CD4-positive, alpha-beta T cell (primary cell): ENCODE measurements at regions of chr7 and their contacts with region 1.

Region 1: DNA sequence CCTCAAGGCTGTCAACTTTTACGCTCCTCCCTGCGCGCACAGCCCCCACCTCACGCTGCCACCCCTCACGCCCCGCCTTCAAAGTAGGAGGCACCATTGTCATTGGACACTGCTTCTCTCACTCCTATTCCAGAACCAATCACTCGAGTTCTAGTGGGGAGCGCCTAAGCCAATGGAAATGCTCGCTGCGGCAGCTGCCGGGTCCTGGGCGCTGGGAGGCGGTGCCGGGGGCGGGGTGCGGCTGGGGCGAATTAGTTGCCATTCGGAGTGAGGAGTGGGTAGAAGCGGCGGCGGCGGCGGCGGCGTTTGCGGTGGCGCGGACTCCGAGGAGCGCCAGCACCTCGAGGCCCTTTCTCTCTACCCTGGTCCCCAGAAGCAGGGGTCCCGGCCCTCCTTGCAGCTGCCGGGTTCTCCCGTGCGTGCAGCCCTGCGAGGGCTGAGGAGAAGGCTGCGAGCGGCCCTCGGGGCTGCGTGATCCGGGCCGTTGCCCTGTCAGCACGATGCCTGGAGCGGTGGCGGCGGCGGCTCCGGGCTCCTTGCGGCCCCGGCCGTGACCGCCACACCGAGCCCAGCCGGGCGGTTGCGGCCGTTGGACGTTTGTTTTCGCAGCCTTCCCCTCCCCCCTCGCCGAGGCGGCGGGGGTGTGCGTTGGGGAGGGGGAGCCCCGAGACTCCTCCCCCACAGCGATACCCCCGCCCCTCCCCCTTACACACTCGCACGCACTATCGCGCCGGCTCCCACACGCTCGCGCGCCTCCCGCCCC is at the start of gene GLCCI1:
- DNase-seq: peak; percentile 91 to 99 (median 96)
- ATAC-seq: peak; percentile 90
- H3K4me3 ChIP-seq: peak within 1 kb of the TSS; percentile 86
- H3K4me3 Mint-ChIP-seq: peak within 1 kb of the TSS; percentile 94
- H3K27ac ChIP-seq: peak within 1 kb of the TSS; percentile 69 to 92
- H3K27ac Mint-ChIP-seq: peak within 1 kb of the TSS; percentile 78
- H3K4me1 ChIP-seq: peaks cover 14% of the 10 kb centered on the region
- H3K4me1 Mint-ChIP-seq: peaks cover 36% of the 10 kb centered on the region
- H3K27me3 ChIP-seq: no peaks in the 10 kb centered on the region
- H3K27me3 Mint-ChIP-seq: no peaks in the 10 kb centered on the region
- CTCF ChIP-seq: no peak
- total RNA-seq, gene GLCCI1: 22.2 to 22.3 TPM

Region 2: GRCh38 chr7:7182156-7183060 is 786.3 kb before region 1 on chr7 and contains the start of gene C1GALT1:
- CTCF ChIA-PET with region 1: no interaction called
- POLR2A ChIA-PET with region 1: interaction called, 3 read pairs
- intact Hi-C with region 1: loop called in 1 of 2 experiments (anchors 10 kb)
- DNase-seq: peak; percentile 97 to 100 (median 98)
- ATAC-seq: peak; percentile 84
- H3K4me3 ChIP-seq: peak within 1 kb of the TSS; percentile 95
- H3K4me3 Mint-ChIP-seq: peak within 1 kb of the TSS; percentile 94
- H3K27ac ChIP-seq: peak within 1 kb of the TSS; percentile 89 to 91
- H3K27ac Mint-ChIP-seq: no peak within 1 kb of the TSS
- H3K4me1 ChIP-seq: peaks cover 28% of the 10 kb centered on the region
- H3K4me1 Mint-ChIP-seq: peaks cover 8% of the 10 kb centered on the region
- H3K27me3 ChIP-seq: no peaks in the 10 kb centered on the region
- H3K27me3 Mint-ChIP-seq: no peaks in the 10 kb centered on the region
- CTCF ChIP-seq: peak; percentile 48
- total RNA-seq, gene C1GALT1: 49.4 to 51.9 TPM

Region 3: GRCh38 chr7:7761340-7761980 is 207.3 kb before region 1 on chr7:
- CTCF ChIA-PET with region 1: no interaction called
- POLR2A ChIA-PET with region 1: interaction called, 6 read pairs
- intact Hi-C with region 1: loop called in 1 of 2 experiments (anchors 10 kb)
- DNase-seq: peak in 3 of 14 experiments; percentile 62 to 75 (median 73)
- ATAC-seq: peak; percentile 27
- H3K4me3 ChIP-seq: peak overlapping the region; percentile 55
- H3K4me3 Mint-ChIP-seq: peak overlapping the region; percentile 94
- H3K27ac ChIP-seq: peak overlapping the region; percentile 31 to 39
- H3K27ac Mint-ChIP-seq: peak overlapping the region; percentile 99
- H3K4me1 ChIP-seq: peaks cover 11% of the 10 kb centered on the region
- H3K4me1 Mint-ChIP-seq: peaks cover 51% of the 10 kb centered on the region
- H3K27me3 ChIP-seq: no peaks in the 10 kb centered on the region
- H3K27me3 Mint-ChIP-seq: no peaks in the 10 kb centered on the region
- CTCF ChIP-seq: peak; percentile 25

Region 4: DNA sequence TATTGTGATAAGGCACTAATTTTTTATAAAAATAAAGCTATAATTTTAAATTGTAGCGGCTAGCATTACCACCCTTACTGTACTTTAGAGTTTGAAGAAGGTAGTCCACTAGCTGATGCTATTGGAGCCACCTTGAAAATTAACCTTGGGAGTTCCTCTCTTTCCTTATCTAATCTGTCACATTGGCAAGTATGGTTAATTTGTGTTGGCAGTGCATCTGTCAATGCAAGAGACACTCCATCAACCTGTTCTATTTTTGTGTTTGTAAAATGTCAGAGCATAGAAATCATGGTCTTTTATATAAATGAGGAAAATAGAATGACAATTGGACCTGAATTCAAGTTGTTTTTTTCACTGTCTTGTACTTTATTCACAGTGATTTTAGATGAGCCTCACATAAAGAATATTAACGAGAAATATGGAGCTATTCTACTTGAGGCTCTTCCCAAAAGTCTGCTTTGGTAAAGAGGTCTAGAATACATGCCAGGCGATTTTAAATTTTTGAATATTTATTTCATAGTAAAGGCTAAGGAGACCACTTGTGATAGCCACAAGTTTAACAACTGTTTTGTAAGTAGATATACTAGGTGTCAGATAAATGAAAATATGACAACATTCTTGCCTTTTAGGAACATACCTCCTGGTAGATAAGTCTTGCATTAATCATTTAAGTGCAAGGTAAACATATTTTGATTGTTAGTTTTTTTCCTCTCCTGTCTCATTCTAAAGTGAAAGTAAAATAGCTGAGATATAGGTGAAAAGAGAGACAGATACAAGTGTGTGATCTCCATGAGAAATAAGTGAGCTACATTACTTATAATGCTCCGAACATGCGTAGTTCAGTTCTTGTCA is 20.6 kb after region 1 on chr7:
- CTCF ChIA-PET with region 1: interaction called, 6 read pairs
- POLR2A ChIA-PET with region 1: interaction called, 54 read pairs
- intact Hi-C with region 1: loop called (anchors 2 kb)
- DNase-seq: peak in 2 of 14 experiments; percentile 24 to 40
- ATAC-seq: peak; percentile 48
- H3K4me3 ChIP-seq: peak overlapping the region; percentile 34
- H3K4me3 Mint-ChIP-seq: peak overlapping the region; percentile 77
- H3K27ac ChIP-seq: peak overlapping the region in 1 of 2 donors; percentile 38
- H3K27ac Mint-ChIP-seq: peak overlapping the region; percentile 68
- H3K4me1 ChIP-seq: no peaks in the 10 kb centered on the region
- H3K4me1 Mint-ChIP-seq: peaks cover 74% of the 10 kb centered on the region
- H3K27me3 ChIP-seq: no peaks in the 10 kb centered on the region
- H3K27me3 Mint-ChIP-seq: no peaks in the 10 kb centered on the region
- CTCF ChIP-seq: no peak

Region 5: DNA sequence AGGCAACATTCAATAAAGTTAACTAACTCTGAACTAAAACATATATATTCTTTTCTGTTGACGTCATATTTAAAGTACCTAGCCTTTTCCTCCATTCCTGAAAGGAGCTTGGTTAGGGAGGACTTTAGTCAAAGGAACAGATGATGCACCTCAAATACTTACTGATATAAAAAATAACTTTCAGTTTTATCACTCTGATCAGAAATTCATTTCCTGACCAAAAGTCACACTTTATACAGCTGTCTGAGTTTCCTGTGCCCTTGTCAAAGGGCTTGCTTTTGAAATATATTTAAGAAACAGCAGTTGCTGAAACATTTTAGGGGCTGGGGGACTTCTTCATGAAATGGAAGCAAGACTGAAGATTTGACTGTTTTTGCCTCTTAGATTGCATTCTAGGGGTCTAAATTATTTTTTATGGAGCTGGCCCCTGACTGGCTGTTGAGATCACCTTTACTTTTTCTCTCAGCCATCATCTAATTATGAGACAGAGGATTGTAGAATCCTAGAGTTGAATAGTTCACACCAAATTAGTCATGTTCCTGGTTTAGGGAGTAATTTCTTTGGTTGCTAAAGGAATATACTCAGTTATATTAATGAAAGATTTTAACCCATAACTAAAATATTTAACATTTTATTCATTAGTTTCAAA is 46.5 kb after region 1 on chr7:
- CTCF ChIA-PET with region 1: no interaction called
- POLR2A ChIA-PET with region 1: interaction called, 35 read pairs
- intact Hi-C with region 1: loop called in 1 of 2 experiments (anchors 2 kb)
- DNase-seq: peak in 3 of 14 experiments; percentile 48 to 78 (median 51)
- ATAC-seq: peak; percentile 87
- H3K4me3 ChIP-seq: no peak overlapping the region
- H3K4me3 Mint-ChIP-seq: peak overlapping the region; percentile 69
- H3K27ac ChIP-seq: peak overlapping the region in 1 of 2 donors; percentile 56
- H3K27ac Mint-ChIP-seq: peak overlapping the region; percentile 85
- H3K4me1 ChIP-seq: peaks cover 15% of the 10 kb centered on the region
- H3K4me1 Mint-ChIP-seq: peaks cover 61% of the 10 kb centered on the region
- H3K27me3 ChIP-seq: no peaks in the 10 kb centered on the region
- H3K27me3 Mint-ChIP-seq: no peaks in the 10 kb centered on the region
- CTCF ChIP-seq: no peak

Region 6: DNA sequence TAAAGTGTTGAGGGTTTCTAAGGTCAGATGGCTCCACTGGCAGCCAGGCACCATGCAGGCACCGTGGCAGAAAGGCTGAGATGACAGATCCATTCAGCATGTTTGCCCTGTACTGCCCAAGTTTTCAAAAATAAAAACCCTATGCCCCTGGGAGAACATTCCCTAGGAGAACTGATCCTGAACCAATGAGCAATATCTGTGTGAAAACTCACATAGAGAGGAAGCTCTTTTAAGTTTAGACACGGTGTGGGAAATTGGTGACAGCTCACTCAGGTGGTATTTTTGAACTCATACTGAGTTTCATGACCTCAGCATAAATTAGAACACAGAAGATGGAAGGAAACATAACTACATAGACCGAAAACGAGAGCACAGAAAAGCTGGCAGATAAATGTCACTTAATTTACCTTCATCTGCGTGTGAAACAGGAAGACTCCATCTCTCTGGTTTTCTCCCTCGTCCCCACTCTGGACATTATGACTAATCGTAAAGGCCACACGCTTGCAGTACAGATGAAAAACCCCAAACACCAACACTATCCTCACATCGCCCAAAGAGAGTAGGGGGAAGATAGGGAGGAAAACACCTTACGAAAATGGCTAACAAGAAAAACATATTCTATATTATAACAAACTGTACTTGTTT is 165.5 kb after region 1 on chr7:
- CTCF ChIA-PET with region 1: interaction called, 3 read pairs
- POLR2A ChIA-PET with region 1: interaction called, 33 read pairs
- intact Hi-C with region 1: loop called (anchors 2 to 5 kb)
- DNase-seq: peak in 4 of 14 experiments; percentile 34 to 73 (median 64)
- ATAC-seq: peak; percentile 33
- H3K4me3 ChIP-seq: no peak overlapping the region
- H3K4me3 Mint-ChIP-seq: peak overlapping the region; percentile 25
- H3K27ac ChIP-seq: peak overlapping the region; percentile 36 to 79
- H3K27ac Mint-ChIP-seq: peak overlapping the region; percentile 96
- H3K4me1 ChIP-seq: peaks cover 56% of the 10 kb centered on the region
- H3K4me1 Mint-ChIP-seq: peaks cover 79% of the 10 kb centered on the region
- H3K27me3 ChIP-seq: no peaks in the 10 kb centered on the region
- H3K27me3 Mint-ChIP-seq: no peaks in the 10 kb centered on the region
- CTCF ChIP-seq: no peak

Region 7: DNA sequence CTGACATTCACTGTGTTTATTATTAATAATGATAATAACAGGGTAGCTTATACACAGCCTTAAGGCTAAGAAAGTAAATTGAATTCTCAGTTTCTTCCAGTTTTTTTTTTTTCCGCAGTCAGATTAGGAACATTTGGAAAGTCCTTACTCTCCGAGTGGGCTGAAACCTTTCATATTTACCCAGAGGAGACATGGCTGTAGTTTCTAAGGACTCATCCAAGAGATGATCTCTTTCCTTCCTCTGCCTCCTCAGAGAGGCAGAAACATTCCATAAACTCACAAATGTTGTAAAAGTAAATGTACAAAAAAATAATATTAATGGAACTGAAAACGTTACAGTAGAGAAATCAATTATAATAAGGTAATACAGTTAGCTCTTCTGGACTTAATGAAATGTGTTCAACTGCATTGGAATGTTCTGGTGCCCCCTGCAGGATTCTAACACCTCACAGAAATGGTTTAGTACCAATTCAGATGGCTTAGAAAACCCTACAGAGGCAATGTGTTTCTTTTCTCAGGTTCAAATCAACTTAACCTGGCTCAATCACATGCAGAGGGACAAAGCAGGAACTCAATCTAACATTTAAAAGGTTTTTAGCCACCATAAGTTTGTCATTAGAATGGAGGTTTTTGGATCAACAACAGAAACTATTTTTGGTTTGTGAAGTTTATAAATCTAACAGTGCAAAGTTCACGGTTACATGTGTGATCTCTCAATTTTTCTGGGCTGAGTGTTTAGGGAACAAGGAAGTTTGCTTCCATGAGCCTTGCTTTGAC is 221.6 kb after region 1 on chr7:
- CTCF ChIA-PET with region 1: interaction called, 11 read pairs
- POLR2A ChIA-PET with region 1: interaction called, 33 read pairs
- intact Hi-C with region 1: loop called (anchors 2 to 5 kb)
- DNase-seq: peak; percentile 40 to 85 (median 66)
- ATAC-seq: peak; percentile 97
- H3K4me3 ChIP-seq: no peak overlapping the region
- H3K4me3 Mint-ChIP-seq: no peak overlapping the region
- H3K27ac ChIP-seq: no peak overlapping the region
- H3K27ac Mint-ChIP-seq: peak overlapping the region; percentile 24
- H3K4me1 ChIP-seq: peaks cover 8% of the 10 kb centered on the region
- H3K4me1 Mint-ChIP-seq: peaks cover 32% of the 10 kb centered on the region
- H3K27me3 ChIP-seq: no peaks in the 10 kb centered on the region
- H3K27me3 Mint-ChIP-seq: no peaks in the 10 kb centered on the region
- CTCF ChIP-seq: peak; percentile 86